Activated T-helper 1 cell treated with anti-CD3 and anti-CD28 coated beads, Interleukin-12 subunit alpha, Interleukin-12 subunit beta, Interleukin-2, Interleukin-4 antibody, amounts not matched to agents 30 ng/mL and 10 ng/mL and 1 ng/mL, durations not matched to agents 14 hours and 24 hours and 36 hours (primary cell): ENCODE measurements at regions of chr1 and their contacts with region 1.

Region 1: DNA sequence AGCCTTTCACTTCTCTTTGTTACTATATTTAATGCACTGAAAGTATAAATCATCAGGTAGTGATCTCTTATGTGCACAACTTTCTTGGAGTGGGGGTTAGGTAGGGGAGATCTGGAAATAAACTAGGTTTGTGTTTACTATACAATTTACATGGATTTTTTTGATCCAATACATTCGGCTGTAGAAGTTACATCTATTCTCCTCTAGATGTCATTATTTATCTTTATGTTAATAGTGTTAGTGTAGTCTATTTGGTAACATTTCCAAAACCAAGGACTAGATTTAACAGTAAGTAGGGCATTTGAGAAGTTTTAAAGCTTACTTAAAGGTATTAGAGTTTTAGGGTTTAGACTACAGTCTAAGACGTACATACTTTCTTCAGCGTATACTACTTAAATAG is 5.4 kb downstream of the VPS45 start:
- DNase-seq: no peak
- H3K4me3 Mint-ChIP-seq: no peak overlapping the region
- H3K27ac Mint-ChIP-seq: no peak overlapping the region
- H3K4me1 Mint-ChIP-seq: peaks cover 20% of the 10 kb centered on the region
- H3K27me3 Mint-ChIP-seq: no peaks in the 10 kb centered on the region

Region 2: DNA sequence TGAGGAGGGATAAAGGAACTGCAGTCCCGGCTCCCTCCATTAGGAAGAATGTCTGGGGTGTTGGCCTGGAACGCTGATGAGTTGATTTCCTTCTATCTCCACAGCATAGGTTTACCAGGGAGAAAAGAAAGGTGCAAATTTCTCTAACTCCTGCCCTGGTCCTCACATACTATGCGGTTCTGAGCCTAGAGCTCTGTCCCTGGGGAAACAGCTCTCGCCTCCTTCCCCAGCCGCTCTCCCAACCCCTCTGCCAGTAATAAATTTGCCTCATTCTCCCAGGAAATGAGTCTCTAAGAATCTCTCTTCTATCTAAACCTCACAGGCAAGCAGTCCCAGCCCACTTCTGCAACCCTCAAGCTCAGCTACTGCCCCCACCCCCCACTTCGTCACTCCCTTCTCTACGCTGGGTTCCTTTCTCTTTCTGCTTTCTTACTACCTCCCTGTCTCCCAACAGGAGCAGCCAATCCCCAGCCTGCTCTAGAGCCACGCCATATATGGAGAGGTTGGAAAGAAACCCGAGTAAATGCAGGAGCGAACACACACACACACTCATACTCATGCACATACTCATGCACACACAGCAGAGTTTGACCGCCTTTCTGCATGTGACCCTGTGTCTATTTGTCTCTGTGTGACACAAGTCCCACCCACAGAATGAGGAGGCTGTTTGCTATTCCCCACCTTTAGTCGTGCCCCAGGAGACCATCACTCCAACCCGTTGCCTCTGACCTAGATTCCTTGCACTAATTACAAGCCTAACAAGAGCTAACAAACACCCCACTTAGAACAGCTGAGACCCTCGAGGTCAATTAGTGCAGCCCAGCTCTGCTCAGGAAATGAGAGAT is 90.1 kb after region 1 on chr1:
- intact Hi-C with region 1: loop called (anchors 1 kb)
- DNase-seq: no peak
- H3K4me3 Mint-ChIP-seq: no peak overlapping the region
- H3K27ac Mint-ChIP-seq: no peak overlapping the region
- H3K4me1 Mint-ChIP-seq: peaks cover 43% of the 10 kb centered on the region
- H3K27me3 Mint-ChIP-seq: peaks cover 5% of the 10 kb centered on the region

Region 3: GRCh38 chr1:150259758-150260669 is 187.1 kb after region 1 on chr1:
- intact Hi-C with region 1: no loop called
- DNase-seq: no peak
- H3K4me3 Mint-ChIP-seq: no peak overlapping the region
- H3K27ac Mint-ChIP-seq: no peak overlapping the region
- H3K4me1 Mint-ChIP-seq: peaks cover 19% of the 10 kb centered on the region
- H3K27me3 Mint-ChIP-seq: peaks cover 37% of the 10 kb centered on the region